Endothelial cell of umbilical vein (primary cell): ENCODE measurements at regions of chr19 and their contacts with region 1.

Region 1: GRCh38 chr19:6737284-6738046 is at the start of gene GPR108:
- DNase-seq: peak; percentile 100
- H3K4me3 ChIP-seq: peak within 1 kb of the TSS; percentile 49 to 99 (median 95)
- H3K27ac ChIP-seq: peak within 1 kb of the TSS; percentile 88
- H3K4me1 ChIP-seq: peaks cover 46% of the 10 kb centered on the region
- H3K27me3 ChIP-seq: no peaks in the 10 kb centered on the region
- CTCF ChIP-seq: no peak
- POLR2A ChIP-seq: peak; percentile 51
- total RNA-seq, gene GPR108: 52.6 and 68.5 TPM in 2 replicates

Region 2: GRCh38 chr19:6372594-6373095 is 364.8 kb before region 1 on chr19 and contains the start of gene ALKBH7:
- CTCF ChIA-PET with region 1: no interaction called
- POLR2A ChIA-PET with region 1: no interaction called
- dilution Hi-C with region 1: no loop called
- intact Hi-C with region 1: loop called (anchors 5 kb)
- DNase-seq: peak; percentile 99
- H3K4me3 ChIP-seq: peak within 1 kb of the TSS; percentile 55 to 82 (median 73)
- H3K27ac ChIP-seq: peak within 1 kb of the TSS; percentile 84
- H3K4me1 ChIP-seq: peaks cover 2% of the 10 kb centered on the region
- H3K27me3 ChIP-seq: no peaks in the 10 kb centered on the region
- CTCF ChIP-seq: no peak
- POLR2A ChIP-seq: no peak
- total RNA-seq, gene ALKBH7: 48.8 and 50.4 TPM in 2 replicates

Region 3: GRCh38 chr19:6516659-6517291 is 220.7 kb before region 1 on chr19:
- CTCF ChIA-PET with region 1: interaction called, 50 read pairs
- POLR2A ChIA-PET with region 1: no interaction called
- dilution Hi-C with region 1: no loop called
- intact Hi-C with region 1: loop called (anchors 1 kb)
- DNase-seq: peak; percentile 74
- H3K4me3 ChIP-seq: peak overlapping the region; percentile 14 to 53 (median 41)
- H3K27ac ChIP-seq: peak overlapping the region; percentile 14
- H3K4me1 ChIP-seq: peaks cover 4% of the 10 kb centered on the region
- H3K27me3 ChIP-seq: no peaks in the 10 kb centered on the region
- CTCF ChIP-seq: peak; percentile 97
- POLR2A ChIP-seq: no peak

Region 4: GRCh38 chr19:6632002-6632621 is 105.4 kb before region 1 on chr19:
- CTCF ChIA-PET with region 1: interaction called, 3 read pairs
- POLR2A ChIA-PET with region 1: no interaction called
- dilution Hi-C with region 1: no loop called
- intact Hi-C with region 1: loop called (anchors 1 kb)
- DNase-seq: peak; percentile 85
- H3K4me3 ChIP-seq: no peak overlapping the region
- H3K27ac ChIP-seq: no peak overlapping the region
- H3K4me1 ChIP-seq: no peaks in the 10 kb centered on the region
- H3K27me3 ChIP-seq: no peaks in the 10 kb centered on the region
- CTCF ChIP-seq: peak; percentile 72 to 79
- POLR2A ChIP-seq: no peak

Region 5: DNA sequence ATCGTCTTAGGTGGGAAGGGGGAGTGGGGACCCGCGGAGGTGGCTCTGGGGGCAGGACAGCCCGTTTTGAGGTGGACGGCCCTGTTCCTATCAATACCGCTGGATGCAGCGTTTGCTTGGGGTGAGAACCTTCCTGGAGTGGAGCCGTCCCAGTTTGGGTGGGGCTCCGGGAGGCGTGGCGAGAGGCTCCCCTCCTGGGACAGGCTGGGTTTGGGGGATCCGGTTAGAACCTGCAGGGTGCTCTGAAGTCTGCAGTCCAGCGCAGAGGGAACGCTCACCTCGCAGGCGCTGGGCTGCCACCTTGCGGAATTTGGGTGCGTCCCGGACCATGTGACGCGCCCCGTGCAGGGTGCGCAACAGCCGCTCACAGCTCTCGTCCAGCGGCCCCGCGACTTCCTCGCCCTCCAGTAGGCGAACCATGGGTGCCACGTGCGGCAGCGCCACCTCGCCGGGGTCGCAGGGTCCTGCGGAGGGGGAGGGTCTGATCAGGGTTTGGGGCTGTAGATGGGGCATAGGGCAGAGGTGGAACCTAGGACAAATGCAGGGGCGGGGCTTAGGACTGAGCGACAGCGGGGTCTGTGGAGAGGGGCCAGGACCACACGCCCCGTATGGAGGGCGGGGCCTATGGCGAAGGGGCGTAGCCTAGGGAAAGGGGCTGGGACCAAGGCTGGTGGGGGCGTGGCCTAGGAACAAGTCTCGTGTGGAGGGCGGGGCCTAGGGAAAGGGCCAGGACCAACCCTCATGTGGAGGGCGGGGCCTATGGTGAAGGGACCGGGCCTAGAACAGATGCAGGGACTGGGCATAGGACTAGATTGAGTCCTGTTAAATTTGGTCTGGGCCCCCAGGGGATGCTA is 15.9 kb after region 1 on chr19:
- CTCF ChIA-PET with region 1: interaction called, 12 read pairs
- POLR2A ChIA-PET with region 1: no interaction called
- dilution Hi-C with region 1: no loop called
- intact Hi-C with region 1: loop called (anchors 1 kb)
- DNase-seq: peak; percentile 82
- H3K4me3 ChIP-seq: peak overlapping the region; percentile 30 to 56 (median 31)
- H3K27ac ChIP-seq: no peak overlapping the region
- H3K4me1 ChIP-seq: peaks cover 8% of the 10 kb centered on the region
- H3K27me3 ChIP-seq: no peaks in the 10 kb centered on the region
- CTCF ChIP-seq: peak; percentile 21 to 42
- POLR2A ChIP-seq: no peak

Region 6: GRCh38 chr19:6779206-6779605 is 41.7 kb after region 1 on chr19:
- CTCF ChIA-PET with region 1: no interaction called
- POLR2A ChIA-PET with region 1: no interaction called
- dilution Hi-C with region 1: no loop called
- intact Hi-C with region 1: no loop called
- DNase-seq: no peak
- H3K4me3 ChIP-seq: no peak overlapping the region
- H3K27ac ChIP-seq: no peak overlapping the region
- H3K4me1 ChIP-seq: no peaks in the 10 kb centered on the region
- H3K27me3 ChIP-seq: no peaks in the 10 kb centered on the region
- CTCF ChIP-seq: no peak
- POLR2A ChIP-seq: no peak

Region 7: DNA sequence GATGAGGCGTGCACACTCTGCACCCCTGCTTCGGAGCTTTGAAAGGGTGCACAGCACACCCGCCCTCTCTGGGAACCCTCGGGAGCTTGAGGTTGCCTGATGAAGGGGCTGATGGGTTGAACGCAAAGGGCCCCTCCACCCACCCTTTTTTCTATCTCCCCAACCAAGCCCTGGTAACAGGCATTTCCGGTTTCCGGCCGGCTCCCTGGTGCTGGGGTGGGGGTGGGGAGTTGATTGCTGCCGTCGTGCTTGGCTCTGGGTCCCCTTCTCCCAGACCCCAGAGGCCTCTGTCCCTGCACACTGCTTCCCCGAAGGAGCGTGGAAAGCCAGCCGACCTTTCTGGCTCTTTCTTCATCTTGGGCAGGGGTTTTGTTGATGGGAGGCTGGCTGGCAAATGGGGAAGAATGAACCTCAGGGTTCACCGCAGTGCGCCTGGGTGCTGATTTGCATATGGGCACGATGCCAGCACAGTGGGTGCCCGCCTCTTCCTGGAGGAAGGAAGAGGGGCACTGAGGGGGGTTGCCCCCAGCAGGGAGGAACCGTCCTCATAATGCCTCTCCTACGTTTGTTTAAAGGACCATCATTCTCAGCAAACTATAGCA is 64.1 kb after region 1 on chr19:
- CTCF ChIA-PET with region 1: interaction called, 5 read pairs
- POLR2A ChIA-PET with region 1: no interaction called
- dilution Hi-C with region 1: no loop called
- intact Hi-C with region 1: loop called (anchors 5 kb)
- DNase-seq: peak; percentile 9
- H3K4me3 ChIP-seq: peak overlapping the region in 2 of 3 experiments; percentile 3 to 15
- H3K27ac ChIP-seq: peak overlapping the region; percentile 38
- H3K4me1 ChIP-seq: peaks cover 18% of the 10 kb centered on the region
- H3K27me3 ChIP-seq: no peaks in the 10 kb centered on the region
- CTCF ChIP-seq: no peak
- POLR2A ChIP-seq: no peak